ENCODE measurements at regions of chr3 and their contacts with region 1.

Region 1: DNA sequence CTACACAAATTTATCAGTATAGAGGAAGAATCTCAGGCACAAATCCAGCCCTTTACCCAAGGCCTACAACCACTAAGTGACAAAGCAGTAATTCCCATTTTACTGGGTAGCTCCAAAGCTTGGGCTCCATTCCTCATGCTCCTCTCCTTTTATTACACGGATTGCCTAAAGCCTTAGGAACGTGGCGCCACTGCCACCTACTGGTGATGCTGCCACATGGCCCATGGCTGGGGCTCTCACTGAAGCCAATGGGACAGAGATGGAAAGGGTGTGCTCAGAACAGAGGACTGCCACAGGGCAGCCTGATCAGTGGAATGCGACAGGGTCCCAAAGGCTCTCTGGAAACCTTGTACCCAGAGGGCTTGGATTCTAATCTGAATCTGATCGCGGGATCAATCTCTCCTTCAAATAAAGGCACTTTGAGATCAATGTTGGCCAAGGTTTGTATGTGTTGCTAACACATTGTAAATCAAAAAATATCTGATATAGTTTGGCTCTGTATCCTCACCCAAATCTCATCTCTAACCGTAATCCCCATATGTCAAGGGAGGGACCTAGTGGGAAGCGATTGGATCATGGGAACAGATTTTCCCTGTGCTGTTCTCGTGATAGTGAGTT is 33.5 kb upstream of the LYZL4 start:
- DNase-seq: peak; percentile 75
- H3K4me3 Mint-ChIP-seq: no peak overlapping the region
- H3K27ac Mint-ChIP-seq: no peak overlapping the region
- H3K4me1 Mint-ChIP-seq: no peaks in the 10 kb centered on the region
- H3K27me3 Mint-ChIP-seq: peaks cover 10% of the 10 kb centered on the region

Region 2: DNA sequence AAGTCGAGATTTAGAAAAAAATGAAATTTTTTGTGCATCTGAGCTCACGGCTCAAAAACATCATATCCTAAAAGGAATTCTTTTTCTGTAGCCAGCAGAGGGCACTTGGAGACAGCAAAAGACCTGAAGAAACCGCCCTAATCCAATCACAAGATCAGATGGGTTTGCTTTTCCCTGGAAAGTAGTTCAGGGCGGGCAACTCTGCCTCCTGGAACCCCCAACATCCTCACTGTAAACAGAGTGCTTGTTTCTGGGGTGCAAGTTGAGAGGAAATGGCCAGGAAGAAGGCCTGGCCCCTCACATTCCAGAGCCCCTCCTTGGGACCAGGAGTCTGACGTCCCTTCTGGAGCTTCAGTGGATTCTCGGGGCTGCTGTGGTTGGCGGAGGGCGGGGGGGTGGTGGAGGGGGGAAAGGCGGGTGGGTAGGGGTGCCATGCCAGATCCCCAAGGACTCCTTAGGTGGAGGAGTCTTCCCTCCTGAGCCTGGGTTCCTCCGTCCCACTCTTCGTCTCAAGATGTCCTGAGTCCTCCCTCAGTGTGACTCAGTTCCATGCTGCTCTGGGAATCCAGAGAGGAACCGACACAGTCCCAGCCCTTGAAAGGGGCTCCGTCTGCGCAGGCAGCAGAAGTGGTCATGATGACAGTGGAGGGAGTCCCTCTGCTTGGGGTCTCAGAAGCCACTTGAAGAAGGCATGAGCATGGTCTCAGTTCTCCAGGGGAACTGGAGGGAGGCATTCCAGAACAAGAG is 213.8 kb before region 1 on chr3:
- CTCF ChIA-PET with region 1: interaction called, 10 read pairs
- POLR2A ChIA-PET with region 1: no interaction called
- DNase-seq: no peak
- H3K4me3 Mint-ChIP-seq: no peak overlapping the region
- H3K27ac Mint-ChIP-seq: no peak overlapping the region
- H3K4me1 Mint-ChIP-seq: peaks cover 7% of the 10 kb centered on the region
- H3K27me3 Mint-ChIP-seq: peaks cover 17% of the 10 kb centered on the region

Region 3: DNA sequence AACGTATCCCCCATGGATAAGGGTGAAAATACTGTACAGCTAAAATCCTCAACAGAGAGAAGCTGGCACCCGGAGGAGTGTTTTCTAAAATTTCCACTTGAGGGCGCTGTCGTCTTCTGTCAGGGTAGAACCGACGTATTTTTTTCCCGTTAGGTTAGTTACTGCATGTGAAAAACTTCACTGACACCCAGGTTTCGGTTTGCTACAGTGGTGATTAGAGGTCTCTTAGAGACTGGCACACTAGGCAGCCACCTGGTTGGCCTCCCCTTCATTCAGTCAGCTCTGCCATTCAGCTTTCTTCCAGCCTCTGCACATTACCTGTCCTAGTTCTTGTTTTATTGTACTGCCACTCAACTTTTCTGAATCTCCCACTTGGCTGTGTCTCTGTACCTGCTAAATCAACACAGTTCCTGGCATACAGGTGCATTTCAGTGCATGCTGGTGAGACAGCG is 196.3 kb before region 1 on chr3:
- CTCF ChIA-PET with region 1: interaction called, 30 read pairs
- POLR2A ChIA-PET with region 1: no interaction called
- DNase-seq: peak; percentile 59
- H3K4me3 Mint-ChIP-seq: no peak overlapping the region
- H3K27ac Mint-ChIP-seq: no peak overlapping the region
- H3K4me1 Mint-ChIP-seq: peaks cover 4% of the 10 kb centered on the region
- H3K27me3 Mint-ChIP-seq: peaks cover 33% of the 10 kb centered on the region